HCT116 (cell line): ENCODE measurements at regions of chr10 and their contacts with region 1.

Region 1: GRCh38 chr10:72319416-72320254 is 35.1 kb downstream of the DNAJB12 start:
- DNase-seq: peak; percentile 75
- ATAC-seq: peak; percentile 57
- H3K4me3 ChIP-seq: peak overlapping the region; percentile 33 to 52
- H3K27ac ChIP-seq: peak overlapping the region; percentile 89
- H3K4me1 ChIP-seq: peaks cover 78 to 92% of the 10 kb centered on the region in 2 experiments
- H3K27me3 ChIP-seq: no peaks in the 10 kb centered on the region
- CTCF ChIP-seq: no peak
- POLR2A ChIP-seq: no peak
- RAD21 ChIP-seq: no peak

Region 2: GRCh38 chr10:71860243-71861029 is 459.2 kb before region 1 on chr10:
- CTCF ChIA-PET with region 1: no interaction called
- POLR2A ChIA-PET with region 1: no interaction called
- RAD21 ChIA-PET with region 1: no interaction called
- intact Hi-C with region 1: loop called (anchors 10 kb)
- DNase-seq: peak; percentile 94
- ATAC-seq: peak; percentile 94
- H3K4me3 ChIP-seq: peak overlapping the region; percentile 16 to 37
- H3K27ac ChIP-seq: peak overlapping the region; percentile 73
- H3K4me1 ChIP-seq: peaks cover 41 to 59% of the 10 kb centered on the region in 2 experiments
- H3K27me3 ChIP-seq: no peaks in the 10 kb centered on the region
- CTCF ChIP-seq: no peak
- POLR2A ChIP-seq: no peak
- RAD21 ChIP-seq: no peak

Region 3: GRCh38 chr10:72248468-72249151 is 71.0 kb before region 1 on chr10:
- CTCF ChIA-PET with region 1: no interaction called
- POLR2A ChIA-PET with region 1: interaction called, 11 read pairs
- RAD21 ChIA-PET with region 1: no interaction called
- intact Hi-C with region 1: no loop called
- DNase-seq: no peak
- ATAC-seq: peak; percentile 78
- H3K4me3 ChIP-seq: peak overlapping the region; percentile 21 to 24; a peak in 3 of 4 replicates
- H3K27ac ChIP-seq: peak overlapping the region; percentile 50; the same call in 1 of the 2 replicates
- H3K4me1 ChIP-seq: peaks cover 32 to 40% of the 10 kb centered on the region in 2 experiments
- H3K27me3 ChIP-seq: no peaks in the 10 kb centered on the region
- CTCF ChIP-seq: no peak
- POLR2A ChIP-seq: peak; percentile 35
- RAD21 ChIP-seq: no peak

Region 4: GRCh38 chr10:72292223-72292691 is 27.4 kb before region 1 on chr10:
- CTCF ChIA-PET with region 1: interaction called, 3 read pairs
- POLR2A ChIA-PET with region 1: interaction called, 180 read pairs
- RAD21 ChIA-PET with region 1: interaction called, 4 read pairs
- intact Hi-C with region 1: loop called (anchors 2 kb)
- DNase-seq: peak; percentile 91
- ATAC-seq: peak; percentile 62
- H3K4me3 ChIP-seq: peak overlapping the region in 1 of 2 experiments; percentile 19; a peak in 1 of 4 replicates
- H3K27ac ChIP-seq: peak overlapping the region; percentile 79
- H3K4me1 ChIP-seq: peaks cover 46 to 85% of the 10 kb centered on the region in 2 experiments
- H3K27me3 ChIP-seq: no peaks in the 10 kb centered on the region
- CTCF ChIP-seq: no peak
- POLR2A ChIP-seq: no peak
- RAD21 ChIP-seq: no peak

Region 5: DNA sequence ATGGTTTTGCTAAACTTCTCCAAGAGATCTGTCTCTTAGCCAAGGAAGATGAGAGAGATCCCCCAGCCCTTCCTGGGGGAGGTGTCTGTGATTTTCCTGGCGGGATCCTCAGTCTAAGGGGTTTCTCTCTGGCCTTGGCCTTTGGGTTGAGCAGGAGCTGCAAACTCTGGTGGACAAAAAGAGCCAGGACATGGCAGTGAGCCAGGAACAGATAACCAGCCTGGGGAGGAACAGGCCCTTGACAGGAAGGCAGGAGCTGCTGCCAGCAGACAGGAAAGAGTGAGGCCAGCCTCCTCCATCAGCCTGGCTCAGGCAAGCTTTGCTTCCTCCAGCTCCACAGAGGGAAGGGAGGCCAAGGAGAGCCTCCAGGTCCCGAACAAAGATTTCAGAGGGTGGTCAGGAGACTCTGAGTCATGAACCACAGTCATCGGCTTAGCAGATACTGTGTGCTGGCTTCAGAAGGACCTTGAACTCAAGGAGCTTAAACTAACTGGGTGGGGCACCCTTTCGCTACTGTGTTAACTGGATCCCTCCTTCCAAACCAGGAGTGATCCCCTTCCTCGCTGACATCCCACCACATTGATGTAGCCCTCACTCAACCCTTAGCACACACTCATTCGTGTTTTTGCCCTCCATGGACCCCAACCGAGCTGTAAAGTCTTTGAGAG is 11.2 kb before region 1 on chr10:
- CTCF ChIA-PET with region 1: no interaction called
- POLR2A ChIA-PET with region 1: interaction called, 162 read pairs
- RAD21 ChIA-PET with region 1: interaction called in 1 of 2 experiments, 3 read pairs
- intact Hi-C with region 1: no loop called
- DNase-seq: peak; percentile 82
- ATAC-seq: peak; percentile 74
- H3K4me3 ChIP-seq: peak overlapping the region in 1 of 2 experiments; percentile 5; a peak in 1 of 4 replicates
- H3K27ac ChIP-seq: peak overlapping the region; percentile 54
- H3K4me1 ChIP-seq: peaks cover 30 to 53% of the 10 kb centered on the region in 2 experiments
- H3K27me3 ChIP-seq: no peaks in the 10 kb centered on the region
- CTCF ChIP-seq: no peak
- POLR2A ChIP-seq: no peak
- RAD21 ChIP-seq: no peak